ENCODE measurements at regions of chr5 and their contacts with region 1.

Region 1: DNA sequence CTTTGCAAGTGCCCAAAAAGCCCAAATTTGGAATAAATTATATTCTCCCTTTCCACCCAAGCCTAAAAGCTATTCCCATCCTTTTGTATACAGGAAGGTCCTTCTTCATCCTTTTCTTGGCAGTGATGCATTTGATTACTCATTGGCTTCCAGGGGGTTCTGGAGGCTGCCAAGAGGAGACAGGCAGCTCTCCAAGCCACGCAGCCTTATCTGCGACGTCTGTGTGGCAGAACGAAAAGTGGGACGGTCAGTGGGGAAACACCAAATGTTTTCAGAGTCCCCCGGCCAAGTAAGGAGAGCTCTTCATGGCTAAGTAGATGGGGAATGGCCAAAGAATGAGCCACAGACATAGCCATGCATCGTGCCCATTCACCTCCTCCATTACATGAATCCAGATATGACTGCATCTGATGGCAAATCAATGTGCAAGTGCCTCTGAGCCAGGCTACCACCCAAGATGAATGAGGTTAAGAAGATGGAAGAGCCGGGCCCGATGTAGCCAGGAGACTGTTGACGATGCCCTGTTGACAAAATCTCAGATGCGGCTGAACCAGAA is 12.1 kb downstream of the ADAM19 start:
- DNase-seq: peak; percentile 52
- H3K4me3 ChIP-seq: no peak overlapping the region
- H3K27ac ChIP-seq: peak overlapping the region; percentile 56
- H3K4me1 ChIP-seq: peaks cover 21% of the 10 kb centered on the region
- H3K27me3 ChIP-seq: no peaks in the 10 kb centered on the region
- CTCF ChIP-seq: no peak
- POLR2A ChIP-seq: no peak

Region 2: DNA sequence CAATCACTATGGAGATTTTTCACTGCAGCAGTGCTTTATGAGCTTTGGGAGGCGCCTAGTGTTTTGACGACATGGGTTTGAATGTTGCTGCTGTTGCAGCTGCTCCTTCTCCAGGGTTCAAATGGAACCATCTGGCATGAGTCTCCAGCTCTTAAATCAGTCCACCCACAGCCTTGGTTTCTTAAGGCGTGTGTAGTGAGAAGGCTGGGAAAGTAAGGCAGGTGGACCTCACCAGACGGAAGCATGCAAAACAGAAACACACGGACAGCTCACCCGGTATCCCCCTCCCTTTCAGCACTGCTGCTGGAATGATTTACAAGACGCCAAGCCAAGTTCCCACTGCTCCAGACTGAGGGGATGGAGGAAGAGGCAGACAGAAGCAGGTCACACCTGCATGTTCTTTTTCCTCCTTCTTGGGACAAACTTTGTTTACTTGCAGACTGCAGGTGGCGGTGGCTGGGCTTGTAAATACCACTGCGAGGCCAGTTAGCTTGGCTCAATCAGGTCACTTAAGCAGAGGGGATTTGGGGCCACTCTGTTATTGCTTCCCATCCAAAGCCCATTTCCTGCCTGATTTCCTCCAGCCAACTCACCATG is 35.3 kb before region 1 on chr5:
- CTCF ChIA-PET with region 1: no interaction called
- POLR2A ChIA-PET with region 1: no interaction called
- dilution Hi-C with region 1: no loop called
- intact Hi-C with region 1: loop called (anchors 5 kb)
- DNase-seq: peak; percentile 85
- H3K4me3 ChIP-seq: no peak overlapping the region
- H3K27ac ChIP-seq: no peak overlapping the region
- H3K4me1 ChIP-seq: peaks cover 7% of the 10 kb centered on the region
- H3K27me3 ChIP-seq: no peaks in the 10 kb centered on the region
- CTCF ChIP-seq: no peak
- POLR2A ChIP-seq: no peak

Region 3: GRCh38 chr5:157540707-157541446 is 22.6 kb before region 1 on chr5:
- CTCF ChIA-PET with region 1: interaction called, 3 read pairs
- POLR2A ChIA-PET with region 1: no interaction called
- dilution Hi-C with region 1: no loop called
- intact Hi-C with region 1: loop called (anchors 2 kb)
- DNase-seq: peak; percentile 79
- H3K4me3 ChIP-seq: no peak overlapping the region
- H3K27ac ChIP-seq: peak overlapping the region; percentile 72
- H3K4me1 ChIP-seq: peaks cover 20% of the 10 kb centered on the region
- H3K27me3 ChIP-seq: no peaks in the 10 kb centered on the region
- CTCF ChIP-seq: no peak
- POLR2A ChIP-seq: no peak

Region 4: GRCh38 chr5:157592594-157592993 is 29.1 kb after region 1 on chr5:
- CTCF ChIA-PET with region 1: no interaction called
- POLR2A ChIA-PET with region 1: no interaction called
- dilution Hi-C with region 1: no loop called
- intact Hi-C with region 1: loop called (anchors 1 kb)
- DNase-seq: peak; percentile 75
- H3K4me3 ChIP-seq: peak overlapping the region in 1 of 3 experiments; percentile 39
- H3K27ac ChIP-seq: peak overlapping the region; percentile 90
- H3K4me1 ChIP-seq: peaks cover 37% of the 10 kb centered on the region
- H3K27me3 ChIP-seq: no peaks in the 10 kb centered on the region
- CTCF ChIP-seq: no peak
- POLR2A ChIP-seq: peak; percentile 48